ENCODE measurements at regions of chr5 and their contacts with region 1.

Region 1: DNA sequence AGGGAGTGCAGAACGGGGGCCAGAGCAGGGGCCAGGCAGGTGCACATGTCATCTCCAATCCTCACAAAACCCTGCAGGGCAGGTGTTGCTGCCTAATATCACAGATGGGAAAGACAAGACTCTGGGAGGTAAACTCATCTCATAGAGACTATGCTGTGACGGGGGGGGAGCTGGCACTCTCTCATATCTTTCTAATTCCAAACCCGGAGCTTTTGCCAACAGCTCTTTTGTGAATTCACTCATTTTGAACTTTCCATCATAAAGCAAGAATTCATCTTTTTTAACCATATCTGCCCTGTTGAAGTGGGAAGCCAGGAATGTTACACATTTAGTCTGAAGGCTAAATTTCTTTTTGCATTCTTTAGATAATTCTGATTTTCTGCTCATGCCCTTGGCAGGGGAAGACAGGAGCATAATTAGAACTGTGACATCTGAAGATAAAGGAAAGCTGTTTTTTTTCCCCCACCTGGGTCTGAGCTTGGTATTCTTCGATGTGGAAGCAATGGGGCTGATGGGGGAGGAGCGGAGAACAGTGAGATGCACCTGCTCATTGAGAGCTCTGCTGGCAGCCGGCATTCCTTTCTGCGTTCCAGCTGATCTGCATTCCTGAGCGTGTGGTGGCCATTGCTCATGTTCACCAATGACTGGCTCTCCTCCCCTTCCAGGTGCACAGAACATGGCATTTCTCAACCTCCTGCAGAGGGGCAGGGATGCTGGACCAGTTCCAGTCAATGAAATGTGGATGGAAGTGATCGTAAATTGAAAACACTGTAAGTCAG is 159.2 kb downstream of the NSG2 start:
- DNase-seq: no peak
- H3K4me3 ChIP-seq: no peak overlapping the region
- H3K27ac ChIP-seq: no peak overlapping the region
- H3K4me1 ChIP-seq: no peaks in the 10 kb centered on the region
- CTCF ChIP-seq: no peak

Region 2: DNA sequence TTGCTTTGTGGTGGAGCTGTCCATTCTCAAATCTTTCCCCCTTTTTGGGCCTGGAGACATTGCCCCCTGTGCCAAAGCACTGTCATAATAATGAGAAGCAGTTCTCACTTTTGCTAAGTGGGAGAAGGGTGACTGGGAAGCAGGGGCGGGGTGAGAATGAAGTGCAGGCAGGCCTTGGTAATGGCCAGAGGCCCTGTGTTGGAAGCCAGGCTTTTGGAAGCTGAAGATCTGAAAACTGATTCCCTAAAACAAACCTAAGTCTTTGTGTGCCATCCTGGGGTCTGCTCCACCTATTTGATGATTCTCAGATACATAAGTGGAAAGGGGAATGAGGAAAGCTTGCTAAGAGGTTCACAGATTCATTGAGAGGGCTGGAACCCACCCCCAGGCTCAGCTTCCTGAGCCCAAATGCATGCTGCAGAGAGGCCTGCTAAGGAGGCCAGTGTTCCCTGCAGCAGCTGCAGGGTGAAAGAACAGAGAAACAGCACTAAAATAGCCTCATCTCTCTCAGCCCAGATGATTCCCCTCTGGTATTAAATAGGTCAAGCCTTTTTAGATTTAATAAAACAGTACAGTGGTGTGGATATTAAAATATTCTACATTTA is 84.2 kb before region 1 on chr5:
- CTCF ChIA-PET with region 1: no interaction called
- POLR2A ChIA-PET with region 1: no interaction called
- intact Hi-C with region 1: loop called (anchors 10 kb)
- DNase-seq: no peak
- H3K4me3 ChIP-seq: no peak overlapping the region
- H3K27ac ChIP-seq: no peak overlapping the region
- H3K4me1 ChIP-seq: no peaks in the 10 kb centered on the region
- CTCF ChIP-seq: no peak